Activated CD4-positive, alpha-beta memory T cell treated with anti-CD3 and anti-CD28 coated beads, Interleukin-2, amount 10 ng/mL, durations not matched to agents 7 days and 5 days (primary cell): ENCODE measurements at regions of chr9 and their contacts with region 1.

Region 1: DNA sequence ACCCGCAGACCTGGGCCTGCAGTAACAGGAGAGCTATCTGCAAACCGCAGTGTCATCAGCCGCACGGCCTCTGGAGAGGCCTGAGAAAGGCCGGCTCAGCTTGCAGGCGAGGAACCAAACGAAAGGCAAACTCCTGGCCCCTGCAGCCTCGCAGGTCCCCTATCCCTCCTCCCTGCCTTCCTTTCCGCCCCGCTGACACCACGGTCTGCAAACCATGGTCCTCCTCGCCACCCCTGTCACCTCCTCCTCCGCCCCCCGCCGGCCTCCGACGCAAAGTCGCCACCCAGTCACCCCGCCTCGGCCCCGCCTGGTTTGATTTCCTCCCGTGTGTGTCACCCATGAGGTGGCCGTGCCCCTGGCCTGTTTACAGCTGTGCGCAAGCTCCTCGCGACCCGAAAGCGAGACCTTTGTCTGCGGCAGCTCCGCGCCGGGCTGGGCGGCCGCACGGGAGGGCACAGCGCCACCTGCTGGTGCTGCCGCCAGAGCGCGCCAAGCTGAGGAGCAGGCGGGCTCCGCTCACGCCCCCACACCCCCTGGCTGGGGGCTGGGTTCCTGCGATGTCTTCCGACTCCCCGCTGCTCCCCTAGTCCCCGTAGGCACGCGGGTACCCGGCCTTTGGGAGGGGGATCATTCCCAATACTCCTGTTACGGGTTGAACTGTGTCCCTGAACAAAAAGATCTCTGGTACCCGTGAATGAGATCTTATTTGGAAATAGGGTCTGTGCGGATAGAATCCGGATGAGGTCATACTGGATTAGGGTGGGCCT is 19.4 kb downstream of the GBGT1 start:
- DNase-seq: peak; percentile 96
- H3K4me3 Mint-ChIP-seq: peak overlapping the region; percentile 75
- H3K27ac Mint-ChIP-seq: peak overlapping the region; percentile 90
- H3K4me1 Mint-ChIP-seq: peaks cover 80% of the 10 kb centered on the region
- H3K27me3 Mint-ChIP-seq: no peaks in the 10 kb centered on the region

Region 2: DNA sequence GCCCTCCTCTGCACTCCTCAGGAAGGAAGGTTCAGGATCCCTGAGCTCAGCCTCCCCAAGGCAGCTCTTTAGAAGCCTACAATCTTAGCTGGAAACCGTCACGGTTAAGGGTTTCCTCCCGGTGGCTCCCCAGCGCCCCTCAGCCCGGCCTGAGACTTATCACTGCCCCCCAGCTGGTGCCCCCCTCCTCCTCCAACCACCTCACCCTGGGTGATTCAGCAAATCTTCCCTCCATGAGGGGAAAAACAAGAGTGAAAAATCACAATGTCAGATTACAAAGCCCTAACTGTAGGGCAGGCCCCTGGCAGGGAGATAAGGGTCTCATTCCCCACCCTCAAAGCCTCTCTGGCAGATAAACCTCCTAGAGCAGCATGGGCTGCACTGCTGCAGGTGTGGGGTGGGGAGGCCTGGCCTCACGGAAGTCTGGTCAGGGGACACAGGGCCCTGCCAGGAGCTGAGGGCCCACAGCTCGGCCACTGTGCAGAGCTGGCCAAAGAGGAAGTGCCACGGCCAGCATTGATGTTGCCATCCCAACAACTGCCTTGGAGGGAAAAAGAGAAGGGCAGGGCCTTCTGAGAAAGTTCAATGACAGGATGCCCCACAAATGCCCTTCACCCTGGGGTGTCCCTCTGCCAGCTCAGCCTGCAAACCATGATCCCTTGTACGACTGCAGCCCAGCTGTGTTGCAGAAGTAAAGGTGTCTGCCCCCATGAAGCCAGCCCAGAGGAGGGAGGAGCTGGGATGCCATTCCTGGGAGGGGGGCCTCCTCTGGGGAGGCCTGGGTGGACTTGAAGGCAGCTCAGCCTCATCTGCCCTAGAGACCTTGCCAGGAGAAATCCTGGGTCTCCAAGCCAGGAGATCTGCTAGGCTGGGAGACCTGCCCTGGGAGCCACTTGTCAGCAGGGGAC is 140.0 kb before region 1 on chr9:
- CTCF ChIA-PET with region 1: no interaction called
- POLR2A ChIA-PET with region 1: no interaction called
- DNase-seq: no peak
- H3K4me3 Mint-ChIP-seq: no peak overlapping the region
- H3K27ac Mint-ChIP-seq: no peak overlapping the region
- H3K4me1 Mint-ChIP-seq: no peaks in the 10 kb centered on the region
- H3K27me3 Mint-ChIP-seq: peaks cover 39% of the 10 kb centered on the region

Region 3: GRCh38 chr9:133030317-133031129 is 113.8 kb before region 1 on chr9 and contains the start of gene GTF3C5:
- CTCF ChIA-PET with region 1: interaction called, 29 read pairs
- POLR2A ChIA-PET with region 1: interaction called, 23 read pairs
- DNase-seq: peak; percentile 94
- H3K4me3 Mint-ChIP-seq: peak within 1 kb of the TSS; percentile 85
- H3K27ac Mint-ChIP-seq: peak within 1 kb of the TSS; percentile 90
- H3K4me1 Mint-ChIP-seq: peaks cover 46% of the 10 kb centered on the region
- H3K27me3 Mint-ChIP-seq: no peaks in the 10 kb centered on the region
- total RNA-seq, gene GTF3C5: 66.8 to 67.3 TPM

Region 4: GRCh38 chr9:133048569-133048968 is 95.8 kb before region 1 on chr9:
- CTCF ChIA-PET with region 1: interaction called, 18 read pairs
- POLR2A ChIA-PET with region 1: no interaction called
- DNase-seq: peak; percentile 64
- H3K4me3 Mint-ChIP-seq: no peak overlapping the region
- H3K27ac Mint-ChIP-seq: no peak overlapping the region
- H3K4me1 Mint-ChIP-seq: peaks cover 3% of the 10 kb centered on the region
- H3K27me3 Mint-ChIP-seq: no peaks in the 10 kb centered on the region

Region 5: GRCh38 chr9:133094842-133095393 is 49.4 kb before region 1 on chr9:
- CTCF ChIA-PET with region 1: interaction called, 13 read pairs
- POLR2A ChIA-PET with region 1: interaction called, 3 read pairs
- DNase-seq: no peak
- H3K4me3 Mint-ChIP-seq: no peak overlapping the region
- H3K27ac Mint-ChIP-seq: no peak overlapping the region
- H3K4me1 Mint-ChIP-seq: no peaks in the 10 kb centered on the region
- H3K27me3 Mint-ChIP-seq: no peaks in the 10 kb centered on the region

Region 6: DNA sequence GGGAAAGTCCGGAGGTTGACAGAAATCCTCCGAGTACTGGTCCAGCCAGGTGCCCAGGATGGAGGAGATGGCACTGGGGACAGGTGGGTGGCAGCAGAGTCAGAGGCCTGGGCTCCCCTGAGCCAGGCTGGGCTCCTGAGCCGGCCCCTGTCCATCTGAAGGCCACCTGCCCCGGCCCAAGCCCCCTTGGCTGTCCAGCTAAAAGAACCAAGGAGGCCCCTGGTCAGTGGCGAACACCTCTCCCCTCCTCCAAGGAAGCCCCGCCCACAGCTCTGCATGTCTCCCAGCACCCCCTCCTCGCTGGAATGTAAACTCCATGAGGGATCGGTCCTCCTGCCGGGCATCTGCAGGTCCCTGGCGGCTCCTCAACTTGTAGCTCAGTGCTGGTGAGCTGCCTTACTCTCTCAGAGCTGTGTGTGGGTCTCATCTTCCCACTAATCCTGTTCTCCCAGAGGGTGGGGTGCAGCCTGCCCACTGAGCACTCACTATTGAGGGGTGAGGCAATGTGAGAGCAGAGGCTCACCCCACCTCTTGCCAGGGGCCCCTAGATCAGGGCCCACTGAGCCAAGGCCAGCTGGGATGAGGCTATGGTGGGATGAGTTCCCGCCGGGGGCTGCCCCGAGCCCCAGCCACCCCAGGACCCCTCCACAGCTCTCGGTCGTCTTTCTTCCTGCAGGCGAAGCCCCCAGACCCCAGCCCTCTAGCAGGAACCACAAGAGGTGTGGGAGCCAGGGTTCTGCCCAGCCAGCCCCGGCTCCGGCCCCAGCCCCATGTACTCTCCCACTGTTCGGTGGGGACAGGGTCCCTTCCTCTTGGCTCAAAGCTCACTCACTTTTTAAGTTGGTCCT is 35.3 kb before region 1 on chr9:
- CTCF ChIA-PET with region 1: interaction called, 131 read pairs
- POLR2A ChIA-PET with region 1: interaction called, 131 read pairs
- DNase-seq: no peak
- H3K4me3 Mint-ChIP-seq: no peak overlapping the region
- H3K27ac Mint-ChIP-seq: no peak overlapping the region
- H3K4me1 Mint-ChIP-seq: peaks cover 23% of the 10 kb centered on the region
- H3K27me3 Mint-ChIP-seq: no peaks in the 10 kb centered on the region

Region 7: GRCh38 chr9:133121198-133121939 is 23.0 kb before region 1 on chr9 and contains the start of gene RALGDS:
- CTCF ChIA-PET with region 1: interaction called, 93 read pairs
- POLR2A ChIA-PET with region 1: interaction called, 131 read pairs
- DNase-seq: peak; percentile 91
- H3K4me3 Mint-ChIP-seq: peak within 1 kb of the TSS; percentile 69
- H3K27ac Mint-ChIP-seq: peak within 1 kb of the TSS; percentile 70
- H3K4me1 Mint-ChIP-seq: peaks cover 86% of the 10 kb centered on the region
- H3K27me3 Mint-ChIP-seq: no peaks in the 10 kb centered on the region
- total RNA-seq, gene RALGDS: 113 to 123 TPM

Region 8: GRCh38 chr9:133158695-133159094 is 14.4 kb after region 1 on chr9:
- CTCF ChIA-PET with region 1: interaction called, 10 read pairs
- POLR2A ChIA-PET with region 1: interaction called, 3 read pairs
- DNase-seq: no peak
- H3K4me3 Mint-ChIP-seq: no peak overlapping the region
- H3K27ac Mint-ChIP-seq: no peak overlapping the region
- H3K4me1 Mint-ChIP-seq: peaks cover 4% of the 10 kb centered on the region
- H3K27me3 Mint-ChIP-seq: peaks cover 6% of the 10 kb centered on the region